HepG2 (cell line): ENCODE measurements at regions of chr10 and their contacts with region 1.

Region 1: DNA sequence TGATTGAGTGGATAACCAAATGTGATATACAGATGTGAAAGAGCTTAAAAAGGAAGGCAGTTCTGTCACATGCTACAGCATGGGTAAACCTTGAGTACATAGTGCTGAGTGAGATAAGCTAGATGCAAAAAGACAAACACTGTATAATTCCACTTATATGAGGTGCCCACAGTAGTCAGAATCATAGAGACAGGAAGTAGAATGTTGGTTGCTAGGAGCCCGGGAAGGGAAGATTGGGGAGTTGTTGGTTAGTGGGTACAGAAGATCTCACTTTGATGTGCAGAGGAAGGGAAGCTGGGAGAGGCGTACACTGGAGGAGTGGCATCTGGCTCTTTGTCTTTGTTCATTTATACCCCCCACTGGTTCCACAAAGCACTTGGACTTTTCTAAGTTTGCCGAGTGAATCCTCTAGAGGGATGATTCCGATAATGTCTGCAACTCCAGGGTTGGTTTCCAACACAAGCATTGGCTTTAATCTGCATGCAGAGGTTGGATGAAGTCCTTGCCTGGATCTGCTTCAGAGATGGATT is 39.5 kb downstream of the TSPAN14 start:
- DNase-seq: peak; percentile 89
- ATAC-seq: peak; percentile 28
- H3K4me3 ChIP-seq: no peak overlapping the region
- H3K27ac ChIP-seq: peak overlapping the region; percentile 48
- H3K4me1 ChIP-seq: peaks cover 100% of the 10 kb centered on the region
- H3K27me3 ChIP-seq: no peaks in the 10 kb centered on the region
- CTCF ChIP-seq: no peak
- EP300 ChIP-seq: peak in 1 of 2 experiments; percentile 35; a peak in 1 of 4 replicates
- POLR2A ChIP-seq: no peak
- RAD21 ChIP-seq: no peak

Region 2: DNA sequence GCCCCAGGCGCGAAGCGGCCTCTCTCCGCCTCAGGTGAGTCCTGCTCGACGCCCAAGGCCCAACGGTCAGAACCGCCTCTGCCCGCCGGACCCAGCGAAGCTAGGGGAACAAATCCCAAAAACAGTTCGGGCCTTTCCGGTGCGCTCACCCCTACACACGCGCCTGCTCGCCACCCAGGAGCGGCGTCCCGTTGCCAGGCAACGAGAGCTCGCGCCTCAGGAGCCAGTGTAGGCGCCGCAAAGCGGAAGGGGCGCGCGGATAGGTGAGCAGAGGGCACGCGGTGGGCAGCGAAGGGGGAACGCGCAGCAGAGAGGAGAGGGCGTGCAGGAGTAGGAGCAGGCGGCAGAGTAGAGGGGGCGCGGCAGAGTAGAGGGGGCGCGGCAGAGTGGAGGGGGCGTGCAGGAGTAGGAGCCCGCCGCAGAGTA is 137.0 kb before region 1 on chr10 and contains the starts of genes DYDC1 and DYDC2:
- CTCF ChIA-PET with region 1: no interaction called
- POLR2A ChIA-PET with region 1: no interaction called
- in situ Hi-C with region 1: no loop called
- intact Hi-C with region 1: no loop called
- DNase-seq: no peak
- ATAC-seq: no peak
- H3K4me3 ChIP-seq: no peak within 1 kb of the TSS; a peak in 1 of 6 replicates
- H3K27ac ChIP-seq: no peak within 1 kb of the TSS
- H3K4me1 ChIP-seq: peaks cover 15% of the 10 kb centered on the region
- H3K27me3 ChIP-seq: no peaks in the 10 kb centered on the region
- CTCF ChIP-seq: no peak
- EP300 ChIP-seq: no peak
- POLR2A ChIP-seq: no peak
- RAD21 ChIP-seq: no peak
- total RNA-seq, gene DYDC1: not detected in 2 replicates
- total RNA-seq, gene DYDC2: 2.3 and 4.2 TPM in 2 replicates

Region 3: GRCh38 chr10:80400136-80400804 is 93.3 kb before region 1 on chr10:
- CTCF ChIA-PET with region 1: no interaction called
- POLR2A ChIA-PET with region 1: no interaction called
- in situ Hi-C with region 1: no loop called
- intact Hi-C with region 1: no loop called
- DNase-seq: no peak
- ATAC-seq: peak; percentile 46; the same call in 1 of the 3 replicates
- H3K4me3 ChIP-seq: no peak overlapping the region
- H3K27ac ChIP-seq: no peak overlapping the region
- H3K4me1 ChIP-seq: peaks cover 9% of the 10 kb centered on the region
- H3K27me3 ChIP-seq: peaks cover 0 to 5% of the 10 kb centered on the region in 2 experiments; a peak in 1 of 5 replicates
- CTCF ChIP-seq: no peak
- EP300 ChIP-seq: no peak
- POLR2A ChIP-seq: no peak
- RAD21 ChIP-seq: no peak

Region 4: DNA sequence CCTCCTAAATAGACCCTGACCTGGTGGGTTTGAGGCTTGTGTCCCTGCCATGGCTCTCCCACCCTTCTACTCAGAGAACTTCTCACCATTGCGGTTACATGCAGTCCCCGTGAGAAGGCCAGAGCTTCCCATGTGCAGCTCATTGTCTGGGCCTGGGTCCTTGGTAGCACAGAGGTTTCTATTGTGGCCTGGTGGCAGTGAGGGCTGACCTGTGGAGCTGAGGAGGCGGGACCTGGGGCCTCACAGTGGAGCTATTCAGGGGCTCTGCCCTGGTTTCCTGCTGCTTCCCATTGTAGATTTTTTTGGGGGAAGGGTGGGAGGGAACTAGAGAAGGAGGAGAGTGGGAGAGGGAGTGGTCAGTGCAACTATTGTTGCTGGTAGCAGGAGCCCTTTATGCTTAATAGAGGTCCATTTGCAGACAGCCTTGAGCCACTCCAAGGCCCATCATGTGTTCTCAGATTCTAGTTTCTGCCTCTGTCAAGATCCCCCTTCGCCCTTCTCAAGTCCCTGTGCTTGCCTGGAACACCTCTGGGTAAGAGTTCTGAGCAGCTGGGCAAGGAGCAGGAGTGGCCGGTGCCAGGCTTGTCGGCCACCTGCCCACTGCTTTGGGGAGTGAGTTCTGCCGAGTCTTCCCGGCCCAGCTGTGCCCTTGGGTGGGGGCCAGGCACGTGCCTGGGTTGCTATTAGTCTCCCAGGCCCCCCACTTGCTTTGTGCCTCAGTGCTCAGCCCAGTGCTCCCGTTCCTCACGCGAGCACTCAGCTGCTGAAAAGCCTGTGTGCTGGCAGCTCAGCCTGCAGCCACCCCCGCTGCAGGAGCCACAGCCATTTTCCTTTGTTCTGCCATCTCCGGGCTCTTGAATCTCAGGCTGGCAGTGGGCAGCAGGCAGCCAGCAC is 28.8 kb before region 1 on chr10:
- CTCF ChIA-PET with region 1: no interaction called
- POLR2A ChIA-PET with region 1: interaction called, 25 read pairs
- in situ Hi-C with region 1: no loop called
- intact Hi-C with region 1: loop called (anchors 2 kb)
- DNase-seq: peak; percentile 97
- ATAC-seq: peak; percentile 97
- H3K4me3 ChIP-seq: peak overlapping the region in 1 of 3 experiments; percentile 46; a peak in 2 of 6 replicates
- H3K27ac ChIP-seq: peak overlapping the region; percentile 90
- H3K4me1 ChIP-seq: peaks cover 99% of the 10 kb centered on the region
- H3K27me3 ChIP-seq: no peaks in the 10 kb centered on the region
- CTCF ChIP-seq: no peak
- EP300 ChIP-seq: peak in 1 of 2 experiments; percentile 53; a peak in 1 of 4 replicates
- POLR2A ChIP-seq: peak in 1 of 2 experiments; percentile 70; a peak in 2 of 4 replicates
- RAD21 ChIP-seq: no peak

Region 5: GRCh38 chr10:80552151-80552646 is 58.6 kb after region 1 on chr10:
- CTCF ChIA-PET with region 1: no interaction called
- POLR2A ChIA-PET with region 1: no interaction called
- in situ Hi-C with region 1: no loop called
- intact Hi-C with region 1: no loop called
- DNase-seq: peak; percentile 19
- ATAC-seq: peak; percentile 96
- H3K4me3 ChIP-seq: no peak overlapping the region
- H3K27ac ChIP-seq: no peak overlapping the region
- H3K4me1 ChIP-seq: peaks cover 13% of the 10 kb centered on the region
- H3K27me3 ChIP-seq: 0 out of 5 replicates have a peak, but pooled peaks cover 0 to 3% of the 10 kb centered on the region in 2 experiments
- CTCF ChIP-seq: no peak
- EP300 ChIP-seq: no peak
- POLR2A ChIP-seq: no peak
- RAD21 ChIP-seq: no peak

Region 6: GRCh38 chr10:80760914-80761371 is 267.4 kb after region 1 on chr10:
- CTCF ChIA-PET with region 1: no interaction called
- POLR2A ChIA-PET with region 1: no interaction called
- in situ Hi-C with region 1: no loop called
- intact Hi-C with region 1: no loop called
- DNase-seq: no peak
- ATAC-seq: no peak
- H3K4me3 ChIP-seq: no peak overlapping the region
- H3K27ac ChIP-seq: no peak overlapping the region
- H3K4me1 ChIP-seq: no peaks in the 10 kb centered on the region
- H3K27me3 ChIP-seq: no peaks in the 10 kb centered on the region; a peak in 1 of 5 replicates
- CTCF ChIP-seq: no peak
- EP300 ChIP-seq: no peak
- POLR2A ChIP-seq: no peak
- RAD21 ChIP-seq: no peak